IMR-90 (cell line): ENCODE measurements at regions of chr4 and their contacts with region 1.

Region 1: DNA sequence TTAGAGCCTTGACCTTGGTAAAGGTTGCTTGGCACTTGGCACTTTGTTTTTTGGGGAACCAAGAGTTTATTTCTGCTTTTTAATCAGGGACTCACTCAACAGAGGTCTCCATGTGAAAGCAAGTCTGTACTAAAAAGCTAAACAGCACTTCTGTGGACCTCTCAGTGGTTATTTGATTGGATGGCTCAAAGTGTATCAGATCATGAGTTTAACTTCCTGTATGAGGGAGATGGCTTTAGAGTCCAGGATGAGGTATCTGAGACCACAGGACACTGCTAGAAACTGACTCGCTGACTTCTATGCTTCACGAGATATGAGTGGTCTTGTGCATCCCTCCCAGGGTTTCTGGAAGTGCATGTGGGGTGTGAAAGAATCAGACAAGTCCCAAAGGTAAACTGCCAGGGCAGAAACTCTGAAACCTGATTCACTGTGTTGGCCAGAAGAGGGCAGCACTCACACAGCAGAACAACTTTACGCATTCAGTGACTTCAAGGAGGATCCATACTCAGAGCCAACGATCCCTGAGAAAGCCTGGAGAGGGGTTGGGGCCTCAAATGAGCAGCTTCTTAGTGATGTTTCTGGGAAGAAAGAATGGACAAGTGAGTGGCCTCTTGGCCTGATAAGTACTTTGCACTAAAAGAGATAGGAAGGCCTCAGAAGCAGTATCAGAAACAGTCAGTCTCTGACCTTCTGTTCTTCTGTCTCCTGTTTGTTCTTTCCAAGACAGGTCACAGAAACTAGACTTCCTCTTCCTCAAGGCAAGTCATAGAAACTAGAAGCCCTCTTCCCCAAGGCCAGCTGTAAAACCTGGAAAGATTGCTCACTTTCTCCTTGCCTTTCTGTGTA is 220.3 kb upstream of the CXCL13 start:
- DNase-seq: peak; percentile 63
- ATAC-seq: peak; percentile 94
- H3K4me3 ChIP-seq: no peak overlapping the region
- H3K27ac ChIP-seq: no peak overlapping the region
- H3K4me1 ChIP-seq: no peaks in the 10 kb centered on the region
- H3K27me3 ChIP-seq: peaks cover 8% of the 10 kb centered on the region
- CTCF ChIP-seq: peak; percentile 81
- POLR2A ChIP-seq: no peak
- RAD21 ChIP-seq: peak; percentile 82

Region 2: GRCh38 chr4:77433418-77433733 is 48.0 kb after region 1 on chr4:
- CTCF ChIA-PET with region 1: no interaction called
- POLR2A ChIA-PET with region 1: no interaction called
- dilution Hi-C with region 1: no loop called
- in situ Hi-C with region 1: no loop called
- intact Hi-C with region 1: loop called (anchors 2 kb)
- DNase-seq: peak; percentile 2
- ATAC-seq: peak; percentile 32; the same call in 1 of the 2 replicates
- H3K4me3 ChIP-seq: no peak overlapping the region
- H3K27ac ChIP-seq: no peak overlapping the region
- H3K4me1 ChIP-seq: no peaks in the 10 kb centered on the region
- H3K27me3 ChIP-seq: no peaks in the 10 kb centered on the region; the same call in 1 of the 2 replicates
- CTCF ChIP-seq: peak; percentile 19; the same call in 1 of the 2 replicates
- POLR2A ChIP-seq: no peak
- RAD21 ChIP-seq: no peak

Region 3: DNA sequence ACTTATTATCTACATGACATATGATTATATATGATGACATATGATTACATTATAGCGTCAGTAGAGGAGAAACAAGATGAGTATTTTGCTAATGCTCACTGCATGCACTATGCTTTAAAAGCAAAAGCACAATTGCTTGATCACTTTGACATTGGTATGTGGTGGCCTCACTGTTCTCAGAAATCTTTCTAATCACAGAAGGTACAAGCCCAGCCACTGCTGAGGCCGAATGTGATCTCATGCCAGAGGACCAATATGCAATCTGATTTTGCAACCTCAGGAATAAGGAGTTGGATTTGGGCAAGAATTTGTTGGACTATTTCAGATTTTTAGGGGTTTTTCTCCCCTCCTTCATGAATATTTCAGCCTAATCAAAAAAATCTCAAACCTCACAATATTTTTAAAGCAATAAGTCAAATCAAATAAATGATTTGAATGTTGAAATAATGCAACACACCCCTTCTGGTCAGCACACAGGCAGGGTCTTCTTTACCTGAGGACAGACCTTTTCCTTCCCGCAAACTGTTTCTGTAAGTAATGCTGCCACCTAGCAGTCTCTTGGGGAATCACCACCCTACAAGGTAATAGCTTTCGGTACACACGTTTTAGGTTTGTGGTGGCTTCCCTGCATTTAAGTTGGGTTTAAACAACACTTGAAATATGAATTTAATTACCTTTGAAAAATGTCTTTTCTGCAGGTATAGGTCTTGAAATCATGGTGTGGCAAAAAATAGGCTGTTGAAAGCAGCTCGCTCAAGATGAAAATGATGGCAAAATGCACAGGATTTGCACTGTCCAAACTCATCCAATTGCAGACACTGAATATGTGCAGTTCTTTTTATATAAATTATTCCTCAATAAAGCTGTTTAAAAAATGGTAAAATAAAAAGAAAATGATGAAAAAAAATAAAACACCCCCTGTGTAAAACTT is 215.4 kb after region 1 on chr4:
- CTCF ChIA-PET with region 1: interaction called, 26 read pairs
- POLR2A ChIA-PET with region 1: no interaction called
- dilution Hi-C with region 1: no loop called
- in situ Hi-C with region 1: loop called (anchors 5 kb)
- intact Hi-C with region 1: loop called (anchors 1 kb)
- DNase-seq: peak; percentile 29
- ATAC-seq: peak; percentile 65
- H3K4me3 ChIP-seq: no peak overlapping the region
- H3K27ac ChIP-seq: no peak overlapping the region
- H3K4me1 ChIP-seq: no peaks in the 10 kb centered on the region
- H3K27me3 ChIP-seq: peaks cover 8% of the 10 kb centered on the region
- CTCF ChIP-seq: peak; percentile 66
- POLR2A ChIP-seq: no peak
- RAD21 ChIP-seq: peak; percentile 71

Region 4: DNA sequence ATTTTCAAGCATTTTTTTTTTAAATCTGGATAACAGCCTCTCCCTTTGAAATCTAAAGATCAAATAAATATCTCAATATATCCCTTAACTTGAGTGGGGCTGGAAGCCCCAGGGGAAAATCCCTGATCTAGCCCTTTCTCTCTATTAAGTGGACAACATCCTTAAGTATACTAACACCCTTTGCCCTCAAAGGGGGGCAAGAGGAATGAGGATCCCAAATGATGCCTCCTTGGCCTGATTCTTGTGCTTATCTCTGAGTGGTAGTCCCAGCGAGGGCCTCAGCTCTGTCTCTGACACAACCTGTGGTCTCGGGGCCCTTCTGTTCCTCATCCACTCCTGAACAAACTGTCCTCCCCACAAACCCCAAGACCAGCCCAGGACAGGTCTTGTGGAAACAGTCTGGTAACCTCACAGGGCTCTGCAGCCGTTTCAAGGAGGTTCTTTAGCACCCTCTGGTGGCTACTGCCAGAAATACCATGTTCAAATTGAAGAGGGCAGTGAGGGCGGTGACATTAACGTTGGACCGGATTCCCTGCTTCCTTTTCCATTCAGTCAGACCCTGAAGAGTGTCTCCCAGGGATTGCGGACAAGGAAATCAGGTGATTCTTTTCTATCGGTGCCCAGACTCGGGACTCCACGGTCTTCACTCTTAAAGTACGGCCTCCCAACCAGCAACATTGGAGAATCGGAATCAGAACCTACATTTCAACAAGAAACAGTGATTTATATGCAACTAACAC is 233.2 kb after region 1 on chr4:
- CTCF ChIA-PET with region 1: no interaction called
- POLR2A ChIA-PET with region 1: no interaction called
- dilution Hi-C with region 1: no loop called
- in situ Hi-C with region 1: no loop called
- intact Hi-C with region 1: loop called (anchors 1 kb)
- DNase-seq: peak; percentile 58
- ATAC-seq: peak; percentile 99
- H3K4me3 ChIP-seq: no peak overlapping the region
- H3K27ac ChIP-seq: no peak overlapping the region
- H3K4me1 ChIP-seq: no peaks in the 10 kb centered on the region
- H3K27me3 ChIP-seq: peaks cover 20% of the 10 kb centered on the region
- CTCF ChIP-seq: peak; percentile 69
- POLR2A ChIP-seq: no peak
- RAD21 ChIP-seq: peak; percentile 62

Region 5: DNA sequence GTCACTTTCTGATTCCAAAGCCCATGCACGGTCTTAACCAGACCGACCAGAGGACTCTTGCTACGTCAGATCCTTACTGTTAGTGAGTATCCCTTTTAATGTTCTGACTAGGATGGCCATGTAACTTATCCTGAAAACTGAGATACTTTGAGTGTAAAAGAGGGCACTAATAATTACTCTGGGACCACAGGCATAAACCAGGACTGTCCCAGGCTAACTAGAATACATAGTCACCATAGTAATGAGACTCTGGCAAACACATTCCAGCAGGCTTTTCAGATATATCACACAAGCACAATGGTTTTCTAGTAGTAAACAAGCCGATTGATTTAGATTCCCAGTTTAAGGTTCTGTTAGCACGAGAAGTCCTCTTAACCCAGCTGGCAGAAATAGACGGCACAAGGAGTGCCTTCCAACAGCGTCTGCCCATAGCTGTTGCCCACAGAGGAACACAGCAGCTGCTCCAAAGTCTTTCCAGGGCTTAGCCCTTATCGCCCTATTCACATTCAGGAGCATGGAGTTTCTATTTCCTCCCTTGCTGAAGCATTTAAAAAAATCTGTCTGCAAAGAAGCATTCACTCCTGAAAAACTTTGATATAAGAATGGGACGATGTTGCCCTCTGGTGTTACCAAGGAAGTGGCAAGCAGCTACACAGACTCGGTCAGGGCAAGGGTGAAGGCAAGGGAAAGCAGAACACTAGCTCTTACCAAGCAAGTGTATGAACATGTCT is 312.7 kb after region 1 on chr4:
- CTCF ChIA-PET with region 1: interaction called, 4 read pairs
- POLR2A ChIA-PET with region 1: no interaction called
- dilution Hi-C with region 1: no loop called
- in situ Hi-C with region 1: loop called (anchors 10 kb)
- intact Hi-C with region 1: loop called (anchors 1 kb)
- DNase-seq: peak; percentile 67
- ATAC-seq: peak; percentile 58
- H3K4me3 ChIP-seq: no peak overlapping the region
- H3K27ac ChIP-seq: no peak overlapping the region
- H3K4me1 ChIP-seq: peaks cover 5% of the 10 kb centered on the region
- H3K27me3 ChIP-seq: peaks cover 2% of the 10 kb centered on the region; the same call in 1 of the 2 replicates
- CTCF ChIP-seq: peak; percentile 51
- POLR2A ChIP-seq: no peak
- RAD21 ChIP-seq: peak; percentile 54

Region 6: GRCh38 chr4:77819843-77820648 is 434.7 kb after region 1 on chr4:
- CTCF ChIA-PET with region 1: no interaction called
- POLR2A ChIA-PET with region 1: no interaction called
- dilution Hi-C with region 1: no loop called
- in situ Hi-C with region 1: no loop called
- intact Hi-C with region 1: loop called (anchors 5 kb)
- DNase-seq: peak; percentile 70
- ATAC-seq: peak; percentile 83
- H3K4me3 ChIP-seq: peak overlapping the region; percentile 94
- H3K27ac ChIP-seq: peak overlapping the region; percentile 86
- H3K4me1 ChIP-seq: peaks cover 2% of the 10 kb centered on the region
- H3K27me3 ChIP-seq: no peaks in the 10 kb centered on the region
- CTCF ChIP-seq: no peak
- POLR2A ChIP-seq: peak; percentile 53; the same call in 1 of the 2 replicates
- RAD21 ChIP-seq: no peak

Region 7: DNA sequence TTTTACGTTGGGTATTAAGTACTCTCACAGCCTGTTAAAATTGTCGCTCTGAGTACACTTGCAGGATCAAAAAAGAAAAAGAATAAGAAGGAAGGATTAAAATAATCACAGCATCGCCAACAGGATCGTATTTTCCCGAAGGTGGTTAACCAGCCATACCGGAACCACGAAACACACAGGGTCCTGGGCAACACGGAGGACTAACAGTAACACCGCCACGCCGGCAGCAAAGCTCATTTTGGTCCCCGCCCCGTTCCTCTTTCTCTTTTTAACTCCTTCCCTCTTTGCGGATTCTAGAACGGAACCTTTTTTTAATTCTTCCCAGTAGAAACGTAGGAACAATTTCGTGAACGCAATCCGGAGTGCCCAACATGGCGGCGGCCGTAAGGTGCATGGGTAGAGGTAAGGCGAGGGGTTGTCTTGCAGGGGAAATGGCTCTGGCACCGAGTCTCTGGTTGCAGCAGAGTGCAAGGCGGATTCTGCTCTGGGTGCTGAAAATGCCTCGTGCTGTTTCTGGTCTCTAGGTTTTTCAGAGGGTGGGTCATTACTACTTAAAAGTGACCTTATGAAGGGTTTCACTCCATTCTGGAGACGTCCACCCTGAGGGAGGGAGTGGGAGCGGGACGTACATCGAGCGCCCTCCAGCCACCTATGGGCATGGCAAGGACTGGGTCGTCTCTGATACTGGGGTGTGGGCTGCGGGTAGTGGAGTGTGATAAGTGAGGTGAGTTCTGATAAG is 477.3 kb after region 1 on chr4 and contains the start of gene MRPL1:
- CTCF ChIA-PET with region 1: no interaction called
- POLR2A ChIA-PET with region 1: no interaction called
- dilution Hi-C with region 1: no loop called
- in situ Hi-C with region 1: loop called (anchors 25 kb)
- intact Hi-C with region 1: loop called (anchors 10 kb)
- DNase-seq: peak; percentile 96
- ATAC-seq: peak; percentile 98
- H3K4me3 ChIP-seq: peak within 1 kb of the TSS; percentile 66
- H3K27ac ChIP-seq: peak within 1 kb of the TSS; percentile 81
- H3K4me1 ChIP-seq: peaks cover 1% of the 10 kb centered on the region; the same call in 1 of the 2 replicates
- H3K27me3 ChIP-seq: no peaks in the 10 kb centered on the region
- CTCF ChIP-seq: no peak
- POLR2A ChIP-seq: peak; percentile 94
- RAD21 ChIP-seq: no peak
- total RNA-seq, gene MRPL1: 13.4 and 33.6 TPM in 2 replicates